ENCODE measurements at regions of chr11 and their contacts with region 1.

Region 1: DNA sequence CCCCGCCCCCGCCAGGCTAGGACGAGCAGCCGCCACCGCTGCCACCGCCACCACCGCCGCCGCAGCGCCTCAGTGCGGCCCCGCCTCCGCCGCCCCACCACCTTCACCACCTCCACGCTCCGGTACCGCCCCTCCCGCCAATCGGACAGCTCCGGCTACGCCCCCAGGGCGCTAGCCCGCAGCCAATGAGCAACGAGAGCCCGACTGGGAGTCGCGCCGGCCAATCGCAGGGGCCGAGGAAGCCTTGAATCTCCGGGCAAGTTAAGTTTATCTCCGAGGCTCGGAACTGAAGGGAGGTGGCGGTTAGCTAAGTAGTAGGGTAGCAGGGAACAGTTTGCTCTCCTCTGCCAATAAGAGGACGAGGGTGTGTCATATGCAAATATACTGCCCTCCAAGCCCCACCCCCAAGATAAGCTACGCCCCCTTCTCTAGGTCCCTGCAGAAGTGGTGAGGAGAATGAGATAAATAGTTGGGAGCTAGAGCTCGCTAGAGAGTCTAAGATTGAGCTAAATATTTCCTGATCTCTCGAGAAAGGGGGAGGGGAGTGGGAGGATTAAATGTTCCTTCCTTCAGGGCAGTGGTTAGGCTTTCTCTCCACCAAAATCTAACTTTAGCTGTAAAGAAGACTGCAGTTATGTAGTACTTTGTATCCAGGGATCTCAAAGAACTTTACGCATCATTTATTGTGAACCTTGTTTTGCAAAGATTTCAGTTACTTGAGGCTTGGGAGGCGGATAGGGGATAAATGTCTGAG is at the start of gene SESN3:
- DNase-seq: peak; percentile 95 to 99 (median 98)
- ATAC-seq: peak; percentile 88
- H3K4me3 ChIP-seq: peak within 1 kb of the TSS; percentile 75 to 79
- H3K4me3 Mint-ChIP-seq: peak within 1 kb of the TSS; percentile 93
- H3K27ac ChIP-seq: peak within 1 kb of the TSS; percentile 61 to 76
- H3K27ac Mint-ChIP-seq: peak within 1 kb of the TSS; percentile 85
- H3K4me1 ChIP-seq: peaks cover 20% of the 10 kb centered on the region
- H3K4me1 Mint-ChIP-seq: peaks cover 59% of the 10 kb centered on the region
- H3K27me3 ChIP-seq: no peaks in the 10 kb centered on the region
- H3K27me3 Mint-ChIP-seq: no peaks in the 10 kb centered on the region
- CTCF ChIP-seq: no peak
- total RNA-seq, gene SESN3: 30.9 to 31.5 TPM

Region 2: GRCh38 chr11:94493281-94494125 is 737.8 kb before region 1 on chr11 and contains the starts of genes ANKRD49 and MRE11:
- CTCF ChIA-PET with region 1: no interaction called
- POLR2A ChIA-PET with region 1: no interaction called
- intact Hi-C with region 1: loop called in 1 of 2 experiments (anchors 10 kb)
- DNase-seq: peak; percentile 91 to 99 (median 96)
- ATAC-seq: peak; percentile 99
- H3K4me3 ChIP-seq: peak within 1 kb of the TSS; percentile 57 to 97
- H3K4me3 Mint-ChIP-seq: peak within 1 kb of the TSS; percentile 95
- H3K27ac ChIP-seq: peak within 1 kb of the TSS; percentile 72 to 94
- H3K27ac Mint-ChIP-seq: peak within 1 kb of the TSS; percentile 99
- H3K4me1 ChIP-seq: peaks cover 33% of the 10 kb centered on the region
- H3K4me1 Mint-ChIP-seq: peaks cover 50% of the 10 kb centered on the region
- H3K27me3 ChIP-seq: no peaks in the 10 kb centered on the region
- H3K27me3 Mint-ChIP-seq: no peaks in the 10 kb centered on the region
- CTCF ChIP-seq: no peak
- total RNA-seq, gene ANKRD49: 45.6 to 50.9 TPM
- total RNA-seq, gene MRE11: 12.3 to 14.7 TPM

Region 3: DNA sequence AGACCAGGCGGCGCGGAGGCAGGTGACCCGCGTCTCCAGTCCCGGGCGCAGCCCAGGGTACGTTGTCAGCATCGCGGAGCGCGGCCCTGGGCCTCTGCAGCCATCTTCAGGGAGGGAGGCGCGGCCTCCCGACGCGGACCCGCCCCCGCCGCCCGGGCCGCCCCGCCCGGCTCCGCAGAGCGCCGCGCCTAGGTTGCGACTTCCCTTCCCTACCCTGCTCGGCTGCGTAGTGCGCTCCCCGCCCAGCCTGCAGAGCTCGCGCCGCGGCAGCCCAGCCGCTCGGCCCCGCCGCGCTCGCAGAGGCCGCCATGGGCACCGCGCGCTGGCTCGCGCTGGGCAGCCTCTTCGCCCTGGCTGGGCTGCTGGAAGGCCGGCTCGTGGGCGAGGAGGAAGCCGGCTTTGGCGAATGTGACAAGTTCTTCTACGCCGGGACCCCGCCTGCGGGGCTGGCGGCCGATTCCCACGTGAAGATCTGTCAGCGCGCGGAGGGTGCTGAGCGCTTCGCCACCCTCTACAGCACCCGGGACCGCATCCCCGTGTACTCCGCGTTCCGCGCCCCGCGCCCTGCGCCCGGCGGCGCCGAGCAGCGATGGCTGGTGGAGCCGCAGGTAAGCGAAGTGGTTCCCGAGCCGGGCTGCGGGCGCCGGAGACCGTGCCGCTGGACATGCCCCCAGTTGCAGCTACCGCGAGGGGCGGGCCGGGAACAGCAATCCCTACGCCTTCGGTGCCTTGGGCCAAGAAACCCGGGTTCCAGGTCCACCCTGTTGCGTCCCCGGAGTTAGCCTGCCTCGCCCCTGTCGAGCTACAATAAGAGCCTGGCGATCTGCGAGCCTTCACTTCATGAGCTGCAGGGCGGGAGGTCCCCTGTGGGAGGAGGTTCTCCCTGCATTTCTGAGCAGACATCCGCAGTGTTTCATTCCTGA is 141.4 kb before region 1 on chr11 and contains the start of gene ENDOD1:
- CTCF ChIA-PET with region 1: interaction called, 3 read pairs
- POLR2A ChIA-PET with region 1: interaction called, 9 read pairs
- intact Hi-C with region 1: loop called (anchors 1 to 5 kb)
- DNase-seq: peak; percentile 75 to 92 (median 83)
- ATAC-seq: peak; percentile 94
- H3K4me3 ChIP-seq: peak within 1 kb of the TSS; percentile 66 to 78
- H3K4me3 Mint-ChIP-seq: peak within 1 kb of the TSS; percentile 93
- H3K27ac ChIP-seq: peak within 1 kb of the TSS; percentile 77 to 84
- H3K27ac Mint-ChIP-seq: peak within 1 kb of the TSS; percentile 99
- H3K4me1 ChIP-seq: peaks cover 25% of the 10 kb centered on the region
- H3K4me1 Mint-ChIP-seq: peaks cover 50% of the 10 kb centered on the region
- H3K27me3 ChIP-seq: no peaks in the 10 kb centered on the region
- H3K27me3 Mint-ChIP-seq: no peaks in the 10 kb centered on the region
- CTCF ChIP-seq: no peak
- total RNA-seq, gene ENDOD1: 5.6 to 5.9 TPM

Region 4: DNA sequence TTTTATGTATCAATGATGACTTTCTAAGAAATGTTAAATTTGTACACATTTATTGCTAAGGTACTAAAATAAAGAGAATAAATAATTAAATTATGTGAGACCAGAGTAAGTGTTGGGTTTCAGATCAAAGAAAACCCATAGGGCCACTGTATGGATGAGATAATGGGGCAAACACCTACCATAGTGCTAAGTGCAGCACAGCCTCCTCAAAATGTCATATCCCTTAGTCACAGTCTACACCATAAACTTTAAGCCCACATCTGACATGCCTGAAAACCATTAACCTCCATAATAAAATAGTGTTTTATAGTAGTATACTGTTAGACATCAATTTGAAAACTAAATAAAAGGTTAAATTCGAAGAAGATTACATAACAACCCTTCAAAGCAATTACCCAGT is 37.8 kb before region 1 on chr11:
- CTCF ChIA-PET with region 1: no interaction called
- POLR2A ChIA-PET with region 1: interaction called, 4 read pairs
- intact Hi-C with region 1: loop called (anchors 5 kb)
- DNase-seq: no peak
- ATAC-seq: no peak
- H3K4me3 ChIP-seq: no peak overlapping the region
- H3K4me3 Mint-ChIP-seq: no peak overlapping the region
- H3K27ac ChIP-seq: no peak overlapping the region
- H3K27ac Mint-ChIP-seq: no peak overlapping the region
- H3K4me1 ChIP-seq: peaks cover 7% of the 10 kb centered on the region
- H3K4me1 Mint-ChIP-seq: peaks cover 30% of the 10 kb centered on the region
- H3K27me3 ChIP-seq: no peaks in the 10 kb centered on the region
- H3K27me3 Mint-ChIP-seq: no peaks in the 10 kb centered on the region
- CTCF ChIP-seq: no peak

Region 5: GRCh38 chr11:95254131-95254704 is 22.9 kb after region 1 on chr11:
- CTCF ChIA-PET with region 1: interaction called, 10 read pairs
- POLR2A ChIA-PET with region 1: interaction called, 50 read pairs
- intact Hi-C with region 1: loop called (anchors 1 kb)
- DNase-seq: peak; percentile 58 to 92 (median 78)
- ATAC-seq: peak; percentile 100
- H3K4me3 ChIP-seq: peak overlapping the region; percentile 40 to 48
- H3K4me3 Mint-ChIP-seq: peak overlapping the region; percentile 83
- H3K27ac ChIP-seq: peak overlapping the region; percentile 28 to 53
- H3K27ac Mint-ChIP-seq: peak overlapping the region; percentile 88
- H3K4me1 ChIP-seq: peaks cover 32% of the 10 kb centered on the region
- H3K4me1 Mint-ChIP-seq: peaks cover 37% of the 10 kb centered on the region
- H3K27me3 ChIP-seq: no peaks in the 10 kb centered on the region
- H3K27me3 Mint-ChIP-seq: no peaks in the 10 kb centered on the region
- CTCF ChIP-seq: no peak

Region 6: DNA sequence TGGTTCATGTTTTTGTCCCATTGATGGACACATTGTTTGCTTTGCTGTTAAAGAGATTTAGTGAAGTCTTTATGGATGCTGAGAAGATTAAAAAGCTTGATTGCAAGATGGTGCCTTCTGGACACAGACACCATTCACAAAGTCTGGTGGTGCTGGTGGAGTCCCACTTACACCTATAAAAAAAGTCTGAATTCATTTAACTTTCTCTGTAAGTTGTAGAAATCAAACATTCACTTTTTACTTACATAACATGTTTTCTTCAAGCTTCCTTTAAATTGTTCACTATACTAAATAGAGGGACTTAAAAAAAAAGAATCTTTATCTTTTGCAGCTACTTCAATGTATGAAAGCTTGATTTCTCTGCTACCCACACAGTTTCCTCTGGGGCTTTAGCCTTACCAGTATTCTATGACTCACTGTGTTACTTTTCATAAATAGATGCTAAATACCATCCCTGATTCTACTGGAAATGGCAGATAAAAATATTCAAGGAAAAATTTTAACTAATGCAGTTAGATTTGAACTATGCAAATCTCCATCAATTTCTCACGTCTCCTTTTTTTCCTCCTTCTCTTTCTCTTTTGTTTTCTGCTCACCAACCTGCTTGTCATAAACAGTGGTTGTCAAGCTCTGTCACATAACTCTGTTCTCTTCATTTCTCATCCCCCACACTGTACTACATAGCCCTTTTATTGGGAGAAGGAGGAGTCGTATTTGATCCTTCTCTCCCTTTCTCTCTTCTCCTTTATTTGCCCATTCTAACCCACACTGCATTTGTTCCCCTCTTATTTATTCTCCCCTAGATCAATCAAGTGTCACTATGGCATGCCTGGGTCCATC is 468.5 kb after region 1 on chr11:
- CTCF ChIA-PET with region 1: interaction called, 19 read pairs
- POLR2A ChIA-PET with region 1: interaction called, 21 read pairs
- intact Hi-C with region 1: loop called (anchors 1 to 5 kb)
- DNase-seq: peak in 2 of 9 experiments; percentile 37 to 60
- ATAC-seq: peak; percentile 76
- H3K4me3 ChIP-seq: peak overlapping the region; percentile 8 to 39
- H3K4me3 Mint-ChIP-seq: peak overlapping the region; percentile 67
- H3K27ac ChIP-seq: peak overlapping the region; percentile 64 to 92
- H3K27ac Mint-ChIP-seq: peak overlapping the region; percentile 92
- H3K4me1 ChIP-seq: peaks cover 64% of the 10 kb centered on the region
- H3K4me1 Mint-ChIP-seq: peaks cover 41% of the 10 kb centered on the region
- H3K27me3 ChIP-seq: no peaks in the 10 kb centered on the region
- H3K27me3 Mint-ChIP-seq: no peaks in the 10 kb centered on the region
- CTCF ChIP-seq: no peak

Region 7: GRCh38 chr11:96389720-96390487 is 1158.6 kb after region 1 on chr11 and contains the starts of genes CCDC82 and JRKL:
- CTCF ChIA-PET with region 1: no interaction called
- POLR2A ChIA-PET with region 1: no interaction called
- intact Hi-C with region 1: loop called (anchors 1 to 10 kb)
- DNase-seq: peak; percentile 96 to 99 (median 98)
- ATAC-seq: peak; percentile 97
- H3K4me3 ChIP-seq: peak within 1 kb of the TSS; percentile 87 to 93
- H3K4me3 Mint-ChIP-seq: peak within 1 kb of the TSS; percentile 94
- H3K27ac ChIP-seq: peak within 1 kb of the TSS; percentile 78 to 79
- H3K27ac Mint-ChIP-seq: peak within 1 kb of the TSS; percentile 96
- H3K4me1 ChIP-seq: peaks cover 15% of the 10 kb centered on the region
- H3K4me1 Mint-ChIP-seq: peaks cover 52% of the 10 kb centered on the region
- H3K27me3 ChIP-seq: no peaks in the 10 kb centered on the region
- H3K27me3 Mint-ChIP-seq: no peaks in the 10 kb centered on the region
- CTCF ChIP-seq: no peak
- total RNA-seq, gene CCDC82: 20.0 to 23.0 TPM
- total RNA-seq, gene JRKL: 2.5 to 2.6 TPM

Measured in CD8-positive, alpha-beta T cell (primary cell).